ENCODE measurements at regions of chr7 and their contacts with region 1.

Region 1: DNA sequence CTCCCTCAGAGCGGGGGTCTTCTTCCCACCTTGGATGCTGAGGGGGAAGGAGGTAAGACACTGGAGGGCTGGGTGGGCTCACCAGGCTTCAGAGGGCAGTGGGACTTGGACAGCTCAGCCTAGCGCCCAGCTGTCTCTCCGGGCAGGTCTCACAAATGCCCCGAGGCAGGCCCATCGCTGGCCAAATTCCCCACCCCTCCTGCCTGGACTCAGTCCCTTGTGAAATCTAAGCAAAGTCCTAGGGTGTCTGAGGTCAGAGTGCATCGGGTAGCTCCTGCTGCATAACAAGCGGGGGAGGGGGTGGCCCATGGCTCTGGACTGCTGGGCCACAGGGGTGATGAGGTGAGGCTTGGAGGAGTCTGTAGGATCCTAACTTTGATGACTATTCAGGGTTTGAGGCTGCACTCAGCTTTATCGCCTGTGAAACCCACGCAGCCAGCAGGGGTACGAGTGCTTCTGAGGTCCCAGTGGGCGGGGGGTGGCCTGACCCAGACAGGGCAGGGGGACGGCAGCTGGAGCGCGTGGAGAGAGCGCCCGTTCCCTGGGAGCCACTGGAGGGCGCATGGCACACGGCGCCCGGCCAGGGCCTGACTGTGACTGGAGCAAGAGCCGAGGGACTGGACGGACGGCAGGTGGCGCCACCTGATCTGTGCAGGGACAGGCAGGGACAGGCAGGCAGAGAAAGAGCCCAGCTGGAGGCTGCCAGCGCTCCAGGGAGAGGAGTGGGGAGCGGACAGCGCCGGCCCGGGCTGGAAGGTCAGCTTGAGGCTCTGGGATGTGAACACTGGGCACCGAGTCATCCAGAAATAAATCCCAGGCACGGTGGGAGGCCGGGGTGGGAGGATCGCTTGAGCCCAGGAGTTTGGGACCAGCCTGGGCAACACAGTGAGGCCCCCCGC is 10.0 kb downstream of the CYP2W1 start:
- DNase-seq: peak; percentile 95
- H3K4me3 ChIP-seq: no peak overlapping the region
- H3K27ac ChIP-seq: no peak overlapping the region
- H3K4me1 ChIP-seq: peaks cover 43% of the 10 kb centered on the region
- CTCF ChIP-seq: peak; percentile 99

Region 2: DNA sequence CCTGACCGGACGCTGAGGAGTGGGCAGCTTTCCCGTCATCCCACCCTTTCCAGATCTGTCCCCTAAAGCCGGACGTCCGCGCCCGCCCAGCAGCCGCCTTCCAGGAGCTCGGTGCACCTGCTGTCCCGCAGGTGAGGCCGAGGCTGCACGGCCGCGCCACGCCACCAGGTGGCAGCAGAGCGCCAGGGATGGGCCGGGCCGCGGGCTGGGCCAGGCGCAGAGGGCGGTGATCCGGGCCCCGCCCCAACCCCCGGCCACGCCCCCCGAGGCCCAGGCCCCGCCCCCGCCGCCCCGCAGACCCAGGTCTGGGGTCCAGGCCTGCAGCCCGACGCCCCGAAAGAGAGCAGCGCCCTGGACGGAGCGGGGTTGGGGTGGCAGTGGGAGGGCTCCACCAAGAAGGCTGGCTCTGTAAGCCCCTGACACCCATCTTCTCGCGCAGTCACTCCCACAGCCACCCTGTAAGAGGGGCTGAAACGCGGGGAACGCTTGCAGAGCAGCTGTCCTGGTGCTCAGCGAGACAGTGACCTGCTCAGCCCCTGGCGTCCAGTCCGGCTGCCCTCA is 670.8 kb before region 1 on chr7:
- CTCF ChIA-PET with region 1: no interaction called
- POLR2A ChIA-PET with region 1: no interaction called
- intact Hi-C with region 1: loop called (anchors 5 kb)
- DNase-seq: peak; percentile 63
- H3K4me3 ChIP-seq: no peak overlapping the region
- H3K27ac ChIP-seq: no peak overlapping the region
- H3K4me1 ChIP-seq: no peaks in the 10 kb centered on the region
- CTCF ChIP-seq: peak; percentile 75

Region 3: DNA sequence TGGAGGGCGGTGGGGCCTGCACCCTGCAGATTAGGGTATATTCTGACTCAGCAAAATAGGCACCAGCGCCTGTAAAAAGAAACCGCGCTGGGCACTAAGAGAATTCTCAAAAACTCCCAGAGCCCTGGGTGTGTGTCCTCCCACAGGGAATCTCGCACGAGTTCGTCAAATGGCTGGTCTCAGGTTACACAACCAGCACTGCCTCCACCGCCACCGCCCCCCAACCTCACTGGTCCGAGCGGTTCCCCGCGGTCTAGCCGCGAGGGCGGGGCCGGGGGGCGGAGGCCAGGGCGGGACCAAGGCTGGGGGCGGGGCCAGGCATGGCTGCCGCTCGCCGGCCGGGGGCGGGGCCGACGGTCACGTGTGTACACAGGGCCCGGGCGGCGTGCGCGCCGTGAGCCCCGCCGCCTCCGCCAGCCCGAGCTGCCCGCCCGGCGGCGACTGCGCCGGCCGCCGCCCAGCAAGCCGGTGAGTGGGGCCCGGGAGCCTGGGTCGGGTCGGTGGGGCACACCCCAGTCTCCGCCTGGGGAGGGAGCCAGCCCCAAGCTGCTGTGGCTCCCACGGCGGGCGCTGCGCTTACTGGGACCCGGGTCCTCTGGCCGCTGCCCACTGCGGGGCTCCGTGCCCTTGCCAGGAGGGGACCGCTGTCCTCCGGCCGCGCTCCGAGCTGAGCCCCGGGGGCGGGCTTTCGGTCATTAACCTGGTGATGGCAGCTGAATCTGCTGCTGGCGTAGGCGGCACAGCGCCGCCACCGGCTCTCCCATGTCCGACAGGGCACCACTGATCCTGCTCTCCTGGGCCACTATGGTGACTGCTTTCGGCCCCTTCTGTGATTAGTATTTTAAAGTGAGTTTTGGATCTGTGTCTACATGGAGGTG is 51.5 kb after region 1 on chr7 and contains the start of gene GPR146:
- CTCF ChIA-PET with region 1: no interaction called
- POLR2A ChIA-PET with region 1: no interaction called
- intact Hi-C with region 1: no loop called
- DNase-seq: peak; percentile 93
- H3K4me3 ChIP-seq: peak within 1 kb of the TSS; percentile 70
- H3K27ac ChIP-seq: peak within 1 kb of the TSS; percentile 49
- H3K4me1 ChIP-seq: peaks cover 15% of the 10 kb centered on the region
- CTCF ChIP-seq: peak; percentile 80
- total RNA-seq, gene GPR146: 0.62 and 0.95 TPM in 2 replicates

Region 4: GRCh38 chr7:1065263-1066260 is 72.6 kb after region 1 on chr7:
- CTCF ChIA-PET with region 1: interaction called, 8 read pairs
- POLR2A ChIA-PET with region 1: interaction called, 5 read pairs
- intact Hi-C with region 1: loop called (anchors 1 kb)
- DNase-seq: peak; percentile 80
- H3K4me3 ChIP-seq: peak overlapping the region; percentile 38
- H3K27ac ChIP-seq: no peak overlapping the region
- H3K4me1 ChIP-seq: peaks cover 51% of the 10 kb centered on the region
- CTCF ChIP-seq: peak; percentile 88

Region 5: GRCh38 chr7:1144269-1144771 is 151.4 kb after region 1 on chr7:
- CTCF ChIA-PET with region 1: interaction called, 4 read pairs
- POLR2A ChIA-PET with region 1: no interaction called
- intact Hi-C with region 1: loop called (anchors 5 kb)
- DNase-seq: peak; percentile 53
- H3K4me3 ChIP-seq: no peak overlapping the region
- H3K27ac ChIP-seq: no peak overlapping the region
- H3K4me1 ChIP-seq: peaks cover 42% of the 10 kb centered on the region
- CTCF ChIP-seq: peak; percentile 73

Region 6: GRCh38 chr7:1175967-1176851 is 183.3 kb after region 1 on chr7:
- CTCF ChIA-PET with region 1: interaction called, 5 read pairs
- POLR2A ChIA-PET with region 1: no interaction called
- intact Hi-C with region 1: loop called (anchors 1 kb)
- DNase-seq: peak; percentile 83
- H3K4me3 ChIP-seq: peak overlapping the region; percentile 33
- H3K27ac ChIP-seq: no peak overlapping the region
- H3K4me1 ChIP-seq: peaks cover 12% of the 10 kb centered on the region
- CTCF ChIP-seq: peak; percentile 91

Region 7: DNA sequence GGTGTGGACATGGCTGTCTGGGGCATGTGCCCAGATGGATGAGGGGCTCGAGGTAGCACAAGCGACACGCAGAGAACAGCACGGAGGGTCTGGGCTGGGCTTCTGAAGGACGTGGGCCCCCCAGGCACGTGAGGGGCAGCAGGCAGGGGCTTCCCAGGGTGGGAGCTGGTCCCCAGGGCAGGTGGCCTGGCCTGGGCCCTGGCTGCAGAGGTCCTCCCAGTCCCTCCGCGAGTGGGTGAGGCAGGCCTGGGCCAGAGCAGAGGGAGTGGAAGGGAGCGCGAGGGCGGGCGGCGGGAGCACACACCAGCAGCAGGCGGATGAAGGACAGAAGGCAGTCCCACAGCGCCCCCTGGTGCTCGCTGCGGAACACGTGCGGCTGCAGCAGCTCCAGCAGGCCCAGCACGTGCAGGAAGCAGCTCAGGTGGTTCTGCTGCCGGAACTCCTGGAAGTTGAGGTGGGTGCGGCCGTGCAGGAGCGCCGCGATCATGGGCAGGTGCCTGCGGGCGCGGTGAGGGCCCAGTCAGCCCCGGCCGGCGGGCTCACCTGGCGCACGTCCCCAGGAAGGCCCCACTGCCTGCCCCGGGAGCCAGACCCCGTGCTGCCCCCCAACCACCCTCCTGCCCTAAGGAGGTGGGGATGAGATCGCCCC is 481.0 kb after region 1 on chr7:
- CTCF ChIA-PET with region 1: no interaction called
- POLR2A ChIA-PET with region 1: no interaction called
- intact Hi-C with region 1: no loop called
- DNase-seq: peak; percentile 88
- H3K4me3 ChIP-seq: no peak overlapping the region
- H3K27ac ChIP-seq: no peak overlapping the region
- H3K4me1 ChIP-seq: peaks cover 5% of the 10 kb centered on the region
- CTCF ChIP-seq: peak; percentile 83

Measured in OCI-LY7 (cell line).